ENCODE measurements at regions of chr17 and their contacts with region 1.

Region 1: GRCh38 chr17:50719144-50719923 is at the start of gene LUC7L3:
- DNase-seq: peak; percentile 95 to 96
- ATAC-seq: peak; percentile 93 to 99 (median 95)
- H3K4me3 ChIP-seq: peak within 1 kb of the TSS; percentile 80
- H3K4me3 Mint-ChIP-seq: peak within 1 kb of the TSS; percentile 99
- H3K27ac ChIP-seq: peak within 1 kb of the TSS; percentile 96
- H3K27ac Mint-ChIP-seq: peak within 1 kb of the TSS; percentile 95 to 98
- H3K4me1 ChIP-seq: peaks cover 23% of the 10 kb centered on the region
- H3K4me1 Mint-ChIP-seq: peaks cover 33% of the 10 kb centered on the region in 2 donors
- H3K27me3 ChIP-seq: no peaks in the 10 kb centered on the region
- H3K27me3 Mint-ChIP-seq: no peaks in the 10 kb centered on the region
- CTCF ChIP-seq: no peak
- total RNA-seq, gene LUC7L3: 152 to 213 (median 196) TPM

Region 2: GRCh38 chr17:50693036-50693682 is 26.2 kb before region 1 on chr17:
- intact Hi-C with region 1: no loop called
- DNase-seq: no peak
- ATAC-seq: no peak
- H3K4me3 ChIP-seq: no peak overlapping the region
- H3K4me3 Mint-ChIP-seq: no peak overlapping the region
- H3K27ac ChIP-seq: no peak overlapping the region
- H3K27ac Mint-ChIP-seq: no peak overlapping the region
- H3K4me1 ChIP-seq: no peaks in the 10 kb centered on the region
- H3K4me1 Mint-ChIP-seq: peaks cover under 1 to 4% of the 10 kb centered on the region in 2 donors
- H3K27me3 ChIP-seq: no peaks in the 10 kb centered on the region
- H3K27me3 Mint-ChIP-seq: no peaks in the 10 kb centered on the region
- CTCF ChIP-seq: no peak

Region 3: DNA sequence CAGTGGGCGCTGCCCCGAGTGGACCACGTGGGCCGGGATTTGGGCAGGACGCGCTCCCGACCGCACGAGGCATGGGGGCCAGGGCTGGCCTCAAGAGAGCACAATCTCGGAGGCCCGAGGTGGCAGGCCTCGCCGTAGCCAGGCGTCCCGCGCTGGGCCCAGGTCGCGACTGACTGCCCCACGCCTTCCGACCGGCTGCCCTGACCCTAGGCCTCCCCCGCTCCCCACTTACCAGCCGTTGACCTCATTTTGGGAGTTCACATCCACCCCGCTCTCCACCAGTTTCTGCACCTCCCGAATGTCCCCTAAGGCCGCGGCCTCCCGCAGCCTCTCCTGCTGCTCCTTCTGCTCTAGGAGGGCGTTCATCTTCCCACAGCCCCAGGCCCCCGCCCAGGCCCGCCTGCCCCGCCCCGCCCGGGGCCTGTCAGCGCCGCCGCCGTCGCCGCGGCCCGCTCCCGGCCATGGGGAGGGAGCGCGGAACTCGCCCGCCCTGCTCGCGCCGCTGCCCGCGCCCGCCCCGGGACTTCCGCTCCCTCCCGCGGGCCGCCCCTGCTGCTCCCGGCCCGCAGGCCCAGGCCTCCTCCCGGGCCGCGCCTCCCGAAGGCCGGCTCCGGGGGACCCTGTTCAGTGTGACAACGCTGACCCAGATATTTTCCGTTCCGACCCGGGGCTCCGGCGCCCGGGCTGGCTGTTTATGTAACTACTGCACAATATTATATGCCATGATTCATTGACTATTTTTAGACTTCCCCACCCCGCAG is 11.9 kb before region 1 on chr17 and contains the start of gene ANKRD40:
- intact Hi-C with region 1: loop called (anchors 1 kb)
- DNase-seq: peak; percentile 91 to 93
- ATAC-seq: peak; percentile 87 to 96 (median 90)
- H3K4me3 ChIP-seq: peak within 1 kb of the TSS; percentile 75
- H3K4me3 Mint-ChIP-seq: peak within 1 kb of the TSS; percentile 96
- H3K27ac ChIP-seq: peak within 1 kb of the TSS; percentile 92
- H3K27ac Mint-ChIP-seq: peak within 1 kb of the TSS; percentile 95 to 97
- H3K4me1 ChIP-seq: peaks cover 25% of the 10 kb centered on the region
- H3K4me1 Mint-ChIP-seq: peaks cover 25 to 26% of the 10 kb centered on the region in 2 donors
- H3K27me3 ChIP-seq: no peaks in the 10 kb centered on the region
- H3K27me3 Mint-ChIP-seq: peaks cover 3 to 5% of the 10 kb centered on the region in 2 donors
- CTCF ChIP-seq: no peak
- total RNA-seq, gene ANKRD40: 22.1 to 32.0 (median 30.8) TPM

Measured in natural killer cell (primary cell).